CD4-positive, alpha-beta memory T cell (primary cell): ENCODE measurements at regions of chr10 and their contacts with region 1.

Region 1: GRCh38 chr10:38010119-38010903 is at the start of gene ZNF33A:
- DNase-seq: peak; percentile 93 to 96 (median 94)
- H3K4me3 ChIP-seq: peak within 1 kb of the TSS; percentile 69 to 83
- H3K4me3 Mint-ChIP-seq: peak within 1 kb of the TSS; percentile 86 to 98 (median 94)
- H3K27ac ChIP-seq: peak within 1 kb of the TSS; percentile 91
- H3K27ac Mint-ChIP-seq: peak within 1 kb of the TSS; percentile 99 to 100 (median 100)
- H3K4me1 ChIP-seq: peaks cover 37% of the 10 kb centered on the region
- H3K4me1 Mint-ChIP-seq: peaks cover 22 to 53% (median 38%) of the 10 kb centered on the region in 4 donors
- H3K27me3 ChIP-seq: no peaks in the 10 kb centered on the region
- H3K27me3 Mint-ChIP-seq: no peaks in the 10 kb centered on the region
- total RNA-seq, gene ZNF33A: 69.0 to 71.4 TPM

Region 2: DNA sequence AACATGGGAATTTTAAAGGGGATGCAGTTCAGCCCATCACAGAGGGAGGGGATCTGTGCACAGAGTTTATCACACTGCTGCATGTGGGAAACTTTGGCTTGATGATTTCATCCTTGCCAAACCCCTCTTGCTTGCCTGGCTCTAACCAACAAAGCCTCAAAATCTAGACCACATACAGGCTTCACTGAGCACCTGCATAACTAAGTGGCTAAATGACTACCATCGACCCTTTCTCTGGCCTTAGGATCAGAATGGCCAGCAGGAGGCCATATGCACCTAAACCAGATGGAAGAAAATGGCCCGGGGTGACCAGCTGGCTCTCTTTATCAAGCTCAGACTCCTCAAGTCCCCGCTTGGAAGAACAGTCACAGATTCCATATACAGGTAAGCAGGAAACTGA is 18.2 kb before region 1 on chr10:
- CTCF ChIA-PET with region 1: no interaction called
- POLR2A ChIA-PET with region 1: no interaction called
- intact Hi-C with region 1: loop called (anchors 2 kb)
- DNase-seq: no peak
- H3K4me3 ChIP-seq: no peak overlapping the region
- H3K4me3 Mint-ChIP-seq: no peak overlapping the region
- H3K27ac ChIP-seq: no peak overlapping the region
- H3K27ac Mint-ChIP-seq: no peak overlapping the region
- H3K4me1 ChIP-seq: no peaks in the 10 kb centered on the region
- H3K4me1 Mint-ChIP-seq: no peaks in the 10 kb centered on the region
- H3K27me3 ChIP-seq: no peaks in the 10 kb centered on the region
- H3K27me3 Mint-ChIP-seq: peaks cover 2 to 6% of the 10 kb centered on the region in 2 donors